ENCODE measurements at regions of chrX and their contacts with region 1.

Region 1: DNA sequence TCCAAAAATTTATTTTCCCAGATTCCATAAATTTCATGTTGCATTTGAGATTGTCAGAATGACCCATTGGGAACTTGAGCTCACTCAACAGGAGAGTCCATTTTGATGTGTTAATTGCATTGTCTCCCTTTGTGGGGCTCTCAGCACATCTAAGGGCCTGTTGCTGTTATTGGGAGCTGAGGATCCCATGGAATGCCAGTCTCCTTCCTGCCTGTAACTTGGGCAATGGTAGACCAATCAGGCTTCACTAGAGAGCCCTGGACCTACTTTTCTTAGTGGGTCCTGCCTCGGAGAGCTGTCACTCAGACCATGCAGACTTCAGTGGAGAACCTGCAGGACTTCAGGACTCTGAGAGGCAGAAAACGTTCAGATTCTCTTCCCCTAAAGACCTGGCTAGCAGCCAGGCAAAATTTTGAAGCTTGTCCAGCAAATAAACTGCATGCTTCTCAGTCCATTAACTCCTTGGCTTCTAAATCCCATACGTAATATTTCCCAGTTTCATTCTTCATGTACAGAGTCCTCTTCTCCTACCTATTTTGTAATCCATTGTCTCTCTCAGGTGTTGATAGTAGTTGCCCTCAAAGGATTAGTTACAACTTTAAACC is 25.1 kb downstream of the OCRL start:
- DNase-seq: no peak
- H3K4me3 ChIP-seq: no peak overlapping the region
- H3K27ac ChIP-seq: no peak overlapping the region
- H3K4me1 ChIP-seq: no peaks in the 10 kb centered on the region
- H3K27me3 ChIP-seq: no peaks in the 10 kb centered on the region
- CTCF ChIP-seq: no peak

Region 2: DNA sequence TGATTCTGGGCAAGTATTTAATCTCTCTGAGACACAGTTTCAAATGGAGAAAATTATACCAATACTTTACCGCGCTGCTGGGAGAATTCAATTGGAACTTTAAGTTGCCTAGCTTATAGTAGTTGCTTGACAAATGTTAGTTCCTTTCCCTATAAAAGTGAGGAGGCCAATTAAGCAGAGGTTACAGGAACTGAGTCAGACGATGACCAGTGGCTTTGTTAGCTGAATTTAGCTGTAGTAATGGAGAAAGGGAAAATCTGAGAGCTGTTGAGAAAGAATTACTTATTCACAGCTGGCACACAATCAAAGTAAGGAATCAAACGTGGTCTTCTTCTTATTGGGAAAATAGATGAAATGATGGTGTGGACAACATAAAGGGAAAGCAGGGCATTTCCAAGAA is 71.5 kb before region 1 on chrX:
- CTCF ChIA-PET with region 1: no interaction called
- POLR2A ChIA-PET with region 1: no interaction called
- intact Hi-C with region 1: loop called (anchors 10 kb)
- DNase-seq: no peak
- H3K4me3 ChIP-seq: no peak overlapping the region
- H3K27ac ChIP-seq: no peak overlapping the region
- H3K4me1 ChIP-seq: no peaks in the 10 kb centered on the region
- H3K27me3 ChIP-seq: no peaks in the 10 kb centered on the region
- CTCF ChIP-seq: no peak

Region 3: DNA sequence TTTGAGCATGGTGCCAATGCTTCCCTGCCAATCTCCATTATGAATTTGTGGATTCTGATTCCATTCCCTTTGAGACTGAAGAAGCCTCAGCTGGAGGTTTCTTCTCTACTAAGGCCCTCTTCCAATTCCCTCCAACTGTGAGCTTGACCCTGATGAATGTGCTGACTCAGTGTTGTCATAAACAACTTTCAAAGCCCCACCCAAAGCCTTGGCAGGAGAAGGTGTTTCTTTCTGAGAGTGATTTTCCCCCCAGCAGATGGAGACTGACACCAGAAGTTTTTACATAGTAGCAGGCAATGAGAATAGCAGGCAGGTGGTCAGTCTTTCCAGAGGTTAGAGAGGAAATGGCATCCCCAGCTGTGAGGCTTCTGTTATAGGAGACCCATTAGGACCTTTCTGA is 28.0 kb after region 1 on chrX:
- CTCF ChIA-PET with region 1: no interaction called
- POLR2A ChIA-PET with region 1: interaction called, 35 read pairs
- intact Hi-C with region 1: no loop called
- DNase-seq: peak; percentile 35 to 46
- H3K4me3 ChIP-seq: no peak overlapping the region
- H3K27ac ChIP-seq: peak overlapping the region; percentile 35
- H3K4me1 ChIP-seq: peaks cover 19% of the 10 kb centered on the region
- H3K27me3 ChIP-seq: no peaks in the 10 kb centered on the region
- CTCF ChIP-seq: no peak

Measured in PC-9 (cell line).